Activated T-helper 1 cell treated with anti-CD3 and anti-CD28 coated beads, Interleukin-12 subunit alpha, Interleukin-12 subunit beta, Interleukin-2, Interleukin-4 antibody, amounts not matched to agents 30 ng/mL and 10 ng/mL and 1 ng/mL, durations not matched to agents 14 hours and 24 hours and 36 hours (primary cell): ENCODE measurements at regions of chr6 and their contacts with region 1.

Region 1: GRCh38 chr6:21593412-21593926 is at the start of gene SOX4:
- DNase-seq: peak; percentile 51
- H3K4me3 Mint-ChIP-seq: peak within 1 kb of the TSS; percentile 87
- H3K27ac Mint-ChIP-seq: peak within 1 kb of the TSS; percentile 89
- H3K4me1 Mint-ChIP-seq: peaks cover 29% of the 10 kb centered on the region
- H3K27me3 Mint-ChIP-seq: peaks cover 46% of the 10 kb centered on the region
- total RNA-seq, gene SOX4: 1.2 and 1.5 TPM in 2 replicates

Region 2: DNA sequence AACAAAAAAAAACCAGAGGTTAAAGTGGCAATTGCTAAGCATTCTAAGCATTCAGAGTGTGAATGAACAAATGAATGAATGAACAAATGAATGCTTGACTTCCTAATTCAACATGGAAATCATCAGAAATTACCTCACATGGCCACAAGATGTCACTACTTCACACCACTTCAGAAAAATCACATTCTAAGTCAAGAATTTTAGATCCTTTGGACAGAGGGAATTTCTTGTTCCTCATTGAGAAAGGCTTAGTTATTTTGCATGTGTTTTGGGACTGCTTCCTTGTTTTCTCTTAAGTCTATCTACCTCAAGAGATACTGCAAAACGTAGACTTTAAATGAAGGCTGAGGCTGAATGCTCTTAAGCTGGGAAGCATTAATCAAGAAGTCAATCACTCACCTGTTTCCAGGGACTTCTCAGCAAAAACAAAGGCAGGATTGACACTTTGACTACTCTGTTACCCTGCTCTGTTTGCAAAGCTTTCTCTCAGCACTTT is 1501.3 kb before region 1 on chr6:
- intact Hi-C with region 1: loop called (anchors 2 kb)
- DNase-seq: no peak
- H3K4me3 Mint-ChIP-seq: no peak overlapping the region
- H3K27ac Mint-ChIP-seq: no peak overlapping the region
- H3K4me1 Mint-ChIP-seq: no peaks in the 10 kb centered on the region
- H3K27me3 Mint-ChIP-seq: no peaks in the 10 kb centered on the region

Region 3: DNA sequence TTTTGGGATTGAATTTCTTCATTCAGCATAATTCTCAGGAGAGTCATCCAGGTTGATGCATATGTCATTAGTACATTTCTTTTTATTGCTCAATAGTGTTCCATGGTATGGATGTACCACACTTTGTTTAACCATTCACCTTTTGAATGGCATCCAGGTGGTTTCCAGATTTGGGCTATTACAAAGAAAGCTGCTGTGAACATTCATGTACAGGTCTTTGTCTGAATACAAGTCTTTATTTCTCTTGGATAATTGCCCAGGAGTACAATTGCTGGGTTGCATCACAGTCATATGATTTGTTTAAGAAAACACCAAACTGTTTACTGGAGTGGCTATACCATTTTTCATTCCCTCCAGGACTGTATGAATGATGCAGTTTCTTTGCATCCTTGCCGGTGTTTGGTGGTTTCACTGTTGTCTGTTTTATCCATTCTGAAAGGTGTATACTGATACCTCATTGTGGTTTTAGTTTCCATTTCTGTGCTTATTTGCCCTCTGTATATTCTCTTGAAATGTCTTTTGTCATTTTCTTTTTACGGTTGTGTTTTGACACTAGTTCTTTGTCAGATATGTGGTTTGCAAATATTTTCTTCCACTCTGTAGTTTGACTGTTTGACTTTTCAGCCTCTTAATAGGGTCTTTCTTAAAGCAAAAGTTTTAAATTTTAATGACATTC is 1050.4 kb before region 1 on chr6:
- intact Hi-C with region 1: loop called (anchors 5 kb)
- DNase-seq: peak; percentile 35
- H3K4me3 Mint-ChIP-seq: peak overlapping the region; percentile 66
- H3K27ac Mint-ChIP-seq: peak overlapping the region; percentile 91
- H3K4me1 Mint-ChIP-seq: peaks cover 50% of the 10 kb centered on the region
- H3K27me3 Mint-ChIP-seq: no peaks in the 10 kb centered on the region

Region 4: GRCh38 chr6:20919677-20920385 is 673.6 kb before region 1 on chr6:
- intact Hi-C with region 1: loop called (anchors 5 kb)
- DNase-seq: no peak
- H3K4me3 Mint-ChIP-seq: no peak overlapping the region
- H3K27ac Mint-ChIP-seq: peak overlapping the region; percentile 82
- H3K4me1 Mint-ChIP-seq: peaks cover 20% of the 10 kb centered on the region
- H3K27me3 Mint-ChIP-seq: no peaks in the 10 kb centered on the region

Region 5: GRCh38 chr6:21634582-21634981 is 41.1 kb after region 1 on chr6:
- intact Hi-C with region 1: no loop called
- DNase-seq: no peak
- H3K4me3 Mint-ChIP-seq: no peak overlapping the region
- H3K27ac Mint-ChIP-seq: no peak overlapping the region
- H3K4me1 Mint-ChIP-seq: no peaks in the 10 kb centered on the region
- H3K27me3 Mint-ChIP-seq: no peaks in the 10 kb centered on the region

Region 6: DNA sequence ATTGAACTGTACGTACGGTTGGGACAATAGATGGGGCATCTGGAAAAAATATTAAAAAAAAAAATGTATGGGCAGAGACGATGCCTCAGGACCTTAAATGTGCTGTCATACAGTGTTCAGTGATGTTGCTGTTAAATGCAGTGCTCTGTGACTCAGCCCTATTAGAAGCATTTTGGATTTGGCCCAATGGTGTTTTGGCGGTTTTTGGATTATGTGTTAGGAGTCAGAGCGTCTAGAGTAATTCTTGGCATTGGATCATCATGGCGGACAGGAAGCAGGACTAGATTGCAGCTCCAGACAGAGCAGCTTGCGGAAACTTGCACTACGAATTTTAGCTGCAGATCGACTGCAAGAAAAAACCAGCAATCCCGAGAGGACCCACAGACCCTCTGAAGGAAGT is 280.1 kb after region 1 on chr6:
- intact Hi-C with region 1: loop called (anchors 10 kb)
- DNase-seq: no peak
- H3K4me3 Mint-ChIP-seq: no peak overlapping the region
- H3K27ac Mint-ChIP-seq: no peak overlapping the region
- H3K4me1 Mint-ChIP-seq: peaks cover 31% of the 10 kb centered on the region
- H3K27me3 Mint-ChIP-seq: no peaks in the 10 kb centered on the region

Region 7: GRCh38 chr6:22145823-22146677 is 552.6 kb after region 1 on chr6:
- intact Hi-C with region 1: loop called (anchors 5 kb)
- DNase-seq: no peak
- H3K4me3 Mint-ChIP-seq: peak overlapping the region; percentile 45
- H3K27ac Mint-ChIP-seq: no peak overlapping the region
- H3K4me1 Mint-ChIP-seq: peaks cover 20% of the 10 kb centered on the region
- H3K27me3 Mint-ChIP-seq: peaks cover 26% of the 10 kb centered on the region

Region 8: DNA sequence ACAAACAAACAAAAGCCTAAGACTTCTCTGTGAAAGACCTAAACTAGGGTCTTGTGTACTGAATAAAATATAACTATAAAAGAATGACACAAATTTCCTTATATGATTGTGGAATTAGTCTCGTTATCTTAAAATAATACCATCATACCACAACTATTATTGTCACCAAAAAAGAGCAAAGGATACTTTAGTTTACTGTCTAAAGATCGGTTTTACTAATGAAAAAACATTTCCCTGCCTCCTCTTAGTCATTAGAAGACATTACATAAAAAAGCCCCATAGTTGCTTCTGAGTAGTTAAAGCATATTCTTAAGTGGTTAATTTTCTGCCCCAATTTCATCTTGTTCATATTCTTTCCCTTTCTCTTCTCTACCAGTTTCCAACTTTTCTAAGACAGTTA is 670.3 kb after region 1 on chr6:
- intact Hi-C with region 1: no loop called
- DNase-seq: no peak
- H3K4me3 Mint-ChIP-seq: no peak overlapping the region
- H3K27ac Mint-ChIP-seq: no peak overlapping the region
- H3K4me1 Mint-ChIP-seq: no peaks in the 10 kb centered on the region
- H3K27me3 Mint-ChIP-seq: no peaks in the 10 kb centered on the region